Endothelial cell of umbilical vein (primary cell): ENCODE measurements at regions of chr6 and their contacts with region 1.

Region 1: DNA sequence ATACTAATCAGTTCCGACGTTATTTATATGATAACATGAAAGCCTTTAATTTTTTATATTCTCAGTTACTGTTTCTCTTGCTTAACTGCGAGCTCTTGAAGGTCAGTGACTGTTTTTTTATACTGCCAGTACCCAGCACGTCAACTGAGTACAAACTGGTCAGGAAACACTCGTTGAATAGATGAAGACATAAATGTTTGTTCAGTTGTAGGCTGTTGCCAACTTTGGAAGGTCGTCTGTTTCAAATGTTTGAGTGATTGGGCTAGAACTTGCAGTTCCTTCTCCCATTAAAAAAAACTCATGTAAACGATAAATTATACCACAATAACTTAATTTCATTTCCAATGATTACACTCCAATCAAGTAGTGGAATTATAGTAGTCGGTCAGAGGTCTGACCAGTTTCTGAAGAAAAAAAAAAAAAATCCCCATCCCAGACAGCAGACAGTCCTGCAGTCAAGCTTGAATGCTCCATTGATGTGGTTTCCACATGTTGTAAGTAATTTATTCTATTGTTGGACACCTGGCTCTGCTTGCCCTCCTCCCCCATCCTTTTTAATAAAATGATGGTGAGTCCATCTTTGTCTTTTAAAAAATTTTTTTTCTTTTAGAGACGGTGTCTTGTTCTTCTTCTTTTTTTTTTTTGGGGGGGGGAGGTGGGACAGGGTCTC is 81.1 kb downstream of the SASH1 start:
- DNase-seq: peak; percentile 96
- H3K4me3 ChIP-seq: no peak overlapping the region
- H3K27ac ChIP-seq: peak overlapping the region; percentile 75
- H3K4me1 ChIP-seq: peaks cover 69% of the 10 kb centered on the region
- H3K27me3 ChIP-seq: no peaks in the 10 kb centered on the region
- CTCF ChIP-seq: no peak
- POLR2A ChIP-seq: peak; percentile 54

Region 2: DNA sequence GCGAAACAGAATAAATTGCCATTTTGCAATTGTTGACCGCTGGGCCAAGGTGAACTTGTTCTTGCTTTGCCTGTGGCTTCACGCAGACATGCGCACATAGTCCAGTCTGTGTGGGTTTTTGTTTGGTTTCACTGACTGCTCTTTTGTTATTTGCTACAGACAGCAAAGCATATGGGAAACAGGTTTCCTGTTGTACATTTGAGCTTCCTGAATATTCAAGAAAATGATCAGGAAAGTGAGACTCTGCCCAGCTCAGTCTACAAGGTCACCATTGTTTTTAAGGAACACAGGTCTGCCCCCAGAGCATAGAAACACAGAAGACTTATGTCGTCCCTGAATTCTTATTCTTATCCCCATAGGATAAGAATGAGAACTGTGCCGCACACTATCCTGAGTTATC is 25.5 kb before region 1 on chr6:
- CTCF ChIA-PET with region 1: interaction called, 5 read pairs
- POLR2A ChIA-PET with region 1: no interaction called
- dilution Hi-C with region 1: no loop called
- intact Hi-C with region 1: loop called (anchors 1 kb)
- DNase-seq: peak; percentile 95
- H3K4me3 ChIP-seq: peak overlapping the region in 1 of 3 experiments; percentile 3
- H3K27ac ChIP-seq: peak overlapping the region; percentile 98
- H3K4me1 ChIP-seq: peaks cover 41% of the 10 kb centered on the region
- H3K27me3 ChIP-seq: no peaks in the 10 kb centered on the region
- CTCF ChIP-seq: no peak
- POLR2A ChIP-seq: peak; percentile 52

Region 3: GRCh38 chr6:148407372-148407771 is 16.4 kb before region 1 on chr6:
- CTCF ChIA-PET with region 1: interaction called, 9 read pairs
- POLR2A ChIA-PET with region 1: no interaction called
- dilution Hi-C with region 1: no loop called
- intact Hi-C with region 1: loop called (anchors 1 kb)
- DNase-seq: peak; percentile 97
- H3K4me3 ChIP-seq: no peak overlapping the region
- H3K27ac ChIP-seq: peak overlapping the region; percentile 92
- H3K4me1 ChIP-seq: peaks cover 39% of the 10 kb centered on the region
- H3K27me3 ChIP-seq: no peaks in the 10 kb centered on the region
- CTCF ChIP-seq: no peak
- POLR2A ChIP-seq: no peak

Region 4: DNA sequence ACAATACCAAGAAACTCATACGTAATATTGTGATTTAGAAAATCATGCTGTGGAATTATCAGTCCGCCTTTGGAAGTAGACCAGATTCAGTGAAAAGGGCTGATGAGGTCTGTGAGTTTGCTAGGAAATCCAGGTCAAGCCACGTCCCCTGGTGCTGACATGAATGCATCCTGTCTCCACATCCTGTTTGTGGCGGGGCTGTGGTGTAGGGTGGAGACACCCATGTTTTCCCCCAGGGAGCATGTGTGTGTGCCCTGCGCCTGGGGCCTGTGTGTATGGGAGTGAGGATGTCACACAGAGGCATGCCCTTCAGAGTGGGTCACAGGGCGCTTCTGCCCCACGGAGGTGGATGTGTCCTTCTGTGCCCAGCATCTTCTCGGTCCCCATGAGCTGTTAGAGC is 28.0 kb after region 1 on chr6:
- CTCF ChIA-PET with region 1: interaction called, 6 read pairs
- POLR2A ChIA-PET with region 1: no interaction called
- dilution Hi-C with region 1: no loop called
- intact Hi-C with region 1: loop called (anchors 1 kb)
- DNase-seq: no peak
- H3K4me3 ChIP-seq: no peak overlapping the region
- H3K27ac ChIP-seq: peak overlapping the region; percentile 61
- H3K4me1 ChIP-seq: peaks cover 85% of the 10 kb centered on the region
- H3K27me3 ChIP-seq: no peaks in the 10 kb centered on the region
- CTCF ChIP-seq: no peak
- POLR2A ChIP-seq: peak; percentile 37